ENCODE measurements at regions of chr20 and their contacts with region 1.

Region 1: DNA sequence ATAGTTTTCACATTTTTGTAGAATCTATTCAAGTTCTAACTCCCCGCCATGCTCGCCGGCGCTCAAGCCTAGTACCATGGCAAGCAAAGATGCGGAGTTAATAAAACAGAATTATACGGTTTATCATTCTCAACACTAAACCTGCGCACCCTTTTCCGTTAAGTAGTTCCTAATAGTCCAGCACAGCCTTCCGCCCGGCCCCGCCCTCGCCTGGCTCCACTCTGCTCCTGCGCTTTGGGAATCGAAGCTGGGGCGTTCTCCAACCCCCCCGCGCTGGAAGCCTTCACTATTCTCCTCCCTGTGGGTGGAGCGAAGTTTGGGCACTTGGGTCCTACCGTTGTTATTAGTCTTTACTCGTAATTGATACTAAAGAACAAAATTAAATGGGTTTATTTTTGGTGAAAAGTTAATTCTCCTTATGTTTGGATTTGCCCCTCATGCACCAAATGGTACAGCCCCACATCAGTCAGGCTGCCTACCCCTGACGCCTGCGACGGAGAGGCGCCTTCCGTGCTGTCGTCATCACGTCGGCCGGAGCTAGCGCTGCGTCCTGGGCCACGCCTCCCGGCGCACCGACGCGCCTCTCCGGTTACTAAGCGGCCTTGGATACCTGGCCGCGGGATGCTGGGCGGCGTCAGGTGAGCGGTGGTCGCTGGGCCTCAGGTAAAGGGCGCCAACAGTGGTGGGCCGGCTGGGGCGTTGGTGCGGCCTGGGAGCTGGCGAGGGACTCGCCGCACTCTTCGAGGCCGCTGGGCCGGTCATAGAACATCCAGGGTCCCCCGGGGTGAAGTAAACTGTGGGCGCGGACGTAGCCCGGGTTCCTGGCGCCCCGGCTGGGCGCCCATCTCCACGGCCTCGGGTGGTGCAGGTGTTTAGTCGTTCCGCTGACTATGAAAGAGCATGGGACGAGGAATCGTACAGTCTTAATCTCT is at the start of gene IFT52:
- DNase-seq: peak; percentile 90 to 94 (median 93)
- H3K4me3 ChIP-seq: peak within 1 kb of the TSS; percentile 94
- H3K27ac ChIP-seq: peak within 1 kb of the TSS; percentile 26 to 66
- H3K4me1 ChIP-seq: no peaks in the 10 kb centered on the region
- H3K27me3 ChIP-seq: no peaks in the 10 kb centered on the region
- CTCF ChIP-seq: peak in 1 of 3 donors; percentile 9
- EP300 ChIP-seq: no peak
- POLR2A ChIP-seq: peak; percentile 60
- total RNA-seq, gene IFT52: 32.7 to 53.7 (median 45.7) TPM

Region 2: DNA sequence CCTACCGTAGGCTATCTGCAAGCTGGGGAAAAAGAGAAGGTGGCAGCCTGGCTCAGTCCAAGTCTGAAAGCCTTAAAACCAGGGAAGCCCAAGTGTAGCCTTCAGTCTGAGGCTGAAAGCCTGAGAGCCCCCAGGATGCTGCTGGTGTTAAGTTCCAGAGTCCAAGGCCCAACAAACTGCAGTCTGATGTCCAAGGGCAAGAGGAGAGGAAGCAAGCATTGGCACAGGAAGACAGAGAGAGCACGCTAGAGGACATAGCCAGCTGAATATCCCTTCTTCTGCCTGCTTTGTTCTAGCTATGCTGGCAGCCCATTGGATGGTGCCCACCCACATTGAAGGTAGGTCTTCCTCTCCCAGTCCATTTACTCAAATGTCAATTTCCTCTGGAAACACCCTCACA is 95.3 kb before region 1 on chr20:
- intact Hi-C with region 1: no loop called
- DNase-seq: no peak
- H3K4me3 ChIP-seq: no peak overlapping the region
- H3K27ac ChIP-seq: no peak overlapping the region
- H3K4me1 ChIP-seq: no peaks in the 10 kb centered on the region
- H3K27me3 ChIP-seq: no peaks in the 10 kb centered on the region
- CTCF ChIP-seq: no peak
- EP300 ChIP-seq: no peak
- POLR2A ChIP-seq: no peak

Region 3: DNA sequence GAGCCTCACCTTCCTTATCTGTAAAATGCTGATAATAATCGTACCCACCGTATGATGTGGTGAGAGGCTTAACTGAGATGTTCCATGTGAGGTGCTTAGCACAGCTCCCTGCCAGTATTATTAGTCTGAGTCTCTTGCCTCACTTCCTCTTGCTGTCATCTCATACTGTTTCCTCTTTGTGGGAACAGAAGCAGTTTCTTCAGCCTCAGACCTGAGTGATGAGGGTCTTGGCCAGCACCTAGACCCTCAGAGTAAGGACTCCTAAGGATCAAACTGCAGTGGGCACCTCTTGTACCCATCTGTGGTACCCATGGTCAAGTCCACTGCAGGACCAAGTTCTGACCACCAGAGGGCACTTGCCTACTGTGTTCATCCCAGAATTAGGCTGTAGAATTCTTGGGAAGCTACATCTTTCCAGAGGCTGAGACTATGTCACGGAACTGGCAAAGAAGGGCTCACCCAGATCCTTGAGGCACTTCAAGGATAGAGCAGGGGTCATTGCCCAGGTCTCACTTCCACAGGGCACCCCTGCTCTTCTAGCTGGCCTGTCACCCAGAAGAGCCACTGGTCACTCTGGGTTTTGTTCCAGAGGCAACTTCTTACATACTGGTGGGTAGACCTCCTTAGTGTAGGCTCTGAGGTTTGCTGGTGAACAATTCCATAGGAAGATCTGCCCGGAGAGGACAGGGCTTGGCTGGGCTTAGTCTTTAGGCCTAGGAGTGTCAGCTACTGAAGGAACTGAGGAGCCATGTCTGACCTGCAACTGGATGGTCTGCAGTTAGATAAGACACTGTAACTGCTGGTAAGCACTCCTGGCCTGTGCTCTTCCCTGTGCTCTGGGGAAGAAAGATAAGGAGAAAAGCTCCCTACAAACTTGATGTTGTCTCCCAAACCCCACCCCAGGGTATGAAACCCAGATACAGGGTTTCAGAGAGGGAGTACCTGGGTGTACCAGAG is 52.5 kb before region 1 on chr20:
- intact Hi-C with region 1: loop called in 1 of 4 experiments (anchors 10 kb)
- DNase-seq: peak; percentile 27 to 67 (median 58)
- H3K4me3 ChIP-seq: no peak overlapping the region
- H3K27ac ChIP-seq: no peak overlapping the region
- H3K4me1 ChIP-seq: no peaks in the 10 kb centered on the region
- H3K27me3 ChIP-seq: no peaks in the 10 kb centered on the region
- CTCF ChIP-seq: peak; percentile 35 to 59 (median 57)
- EP300 ChIP-seq: no peak
- POLR2A ChIP-seq: no peak

Region 4: DNA sequence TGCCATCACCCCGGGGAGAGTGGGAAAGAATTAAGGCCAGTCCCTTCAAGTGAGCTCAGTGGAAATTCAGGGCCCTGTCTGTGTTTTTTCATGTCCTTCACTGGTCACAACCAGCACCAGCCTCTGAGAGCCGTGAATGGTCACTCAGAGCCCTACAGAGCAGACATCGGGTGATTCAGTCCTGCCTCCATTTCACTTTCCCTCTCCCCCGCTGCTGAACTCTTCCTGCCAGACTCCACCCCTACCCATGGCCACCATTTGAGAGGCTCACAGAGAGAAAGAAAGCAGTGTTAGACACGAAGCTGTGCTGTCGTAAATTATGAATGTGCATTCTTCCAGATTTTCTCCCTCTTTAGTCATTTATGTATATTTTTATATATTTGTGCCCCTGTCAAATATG is 751.6 kb after region 1 on chr20:
- intact Hi-C with region 1: no loop called
- DNase-seq: no peak
- H3K4me3 ChIP-seq: no peak overlapping the region
- H3K27ac ChIP-seq: no peak overlapping the region
- H3K4me1 ChIP-seq: no peaks in the 10 kb centered on the region
- H3K27me3 ChIP-seq: no peaks in the 10 kb centered on the region
- CTCF ChIP-seq: no peak
- EP300 ChIP-seq: no peak
- POLR2A ChIP-seq: no peak

Measured in ovary (tissue), 10 donors.